ENCODE measurements at regions of chr11 and their contacts with region 1.

Region 1: GRCh38 chr11:111631666-111632039 is 29.4 kb downstream of the SIK2 start:
- DNase-seq: no peak
- ATAC-seq: no peak
- H3K4me3 ChIP-seq: no peak overlapping the region
- H3K27ac ChIP-seq: peak overlapping the region in 1 of 12 donors; percentile 23
- H3K4me1 ChIP-seq: peaks cover 4 to 59% (median 38%) of the 10 kb centered on the region in 12 donors
- H3K27me3 ChIP-seq: no peaks in the 10 kb centered on the region
- CTCF ChIP-seq: no peak
- POLR2A ChIP-seq: no peak

Region 2: GRCh38 chr11:111272420-111272819 is 359.2 kb before region 1 on chr11:
- intact Hi-C with region 1: no loop called
- DNase-seq: no peak
- ATAC-seq: no peak
- H3K4me3 ChIP-seq: no peak overlapping the region
- H3K27ac ChIP-seq: no peak overlapping the region
- H3K4me1 ChIP-seq: no peaks in the 10 kb centered on the region
- H3K27me3 ChIP-seq: peaks cover 0 to 9% (median 0%) of the 10 kb centered on the region in 9 donors
- CTCF ChIP-seq: no peak
- POLR2A ChIP-seq: no peak

Region 3: GRCh38 chr11:111694851-111695250 is 63.2 kb after region 1 on chr11:
- intact Hi-C with region 1: loop called in 2 of 10 experiments (anchors 5 kb)
- DNase-seq: peak in 1 of 5 donors; percentile 76
- ATAC-seq: peak in 3 of 4 donors; percentile 35 to 90 (median 90)
- H3K4me3 ChIP-seq: no peak overlapping the region
- H3K27ac ChIP-seq: peak overlapping the region in 7 of 12 donors; percentile 1 to 67 (median 27)
- H3K4me1 ChIP-seq: peaks cover 2 to 48% (median 14%) of the 10 kb centered on the region in 12 donors
- H3K27me3 ChIP-seq: no peaks in the 10 kb centered on the region
- CTCF ChIP-seq: no peak
- POLR2A ChIP-seq: no peak

Measured in heart left ventricle (tissue), 16 donors.